ENCODE measurements at regions of chr2 and their contacts with region 1.

Region 1: DNA sequence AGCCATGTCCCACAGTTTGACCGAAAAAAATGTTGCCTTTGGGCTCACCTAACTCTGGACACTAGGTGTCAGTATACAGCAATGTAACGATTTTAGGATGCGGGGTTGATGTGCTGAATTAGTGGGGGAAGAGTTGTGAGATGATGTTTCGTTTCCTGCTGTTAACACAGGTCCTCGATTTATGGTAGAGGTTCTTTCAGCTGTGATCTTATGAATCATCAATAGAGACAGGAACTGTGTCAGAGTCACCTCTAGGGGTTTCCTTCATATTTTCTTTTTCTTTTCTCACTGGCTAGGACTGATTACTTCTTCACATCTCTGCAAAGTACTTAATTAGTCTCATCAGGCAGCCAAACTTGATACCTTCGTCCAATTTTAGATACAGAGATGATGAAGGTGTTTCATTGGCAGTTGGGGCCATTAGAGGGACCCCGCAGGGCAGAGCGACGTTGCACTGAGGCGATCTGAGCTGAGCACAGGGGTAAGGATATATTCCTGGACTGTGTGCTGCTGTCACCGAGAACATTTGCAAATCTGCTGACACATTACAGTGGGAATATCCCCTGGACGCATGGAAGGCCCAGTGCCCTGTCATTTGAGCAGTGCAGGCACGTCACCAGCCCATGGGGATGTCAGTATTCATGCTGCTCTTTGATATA is 10.2 kb upstream of the MMADHC start:
- DNase-seq: peak; percentile 54
- ATAC-seq: peak; percentile 92
- H3K4me3 ChIP-seq: 0 out of 4 replicates have a peak overlapping the region, but pooled peaks of 1 of the 2 experiments have one; percentile 3
- H3K27ac ChIP-seq: no peak overlapping the region
- H3K4me1 ChIP-seq: peaks cover 0 to 10% of the 10 kb centered on the region in 2 experiments; a peak in 2 of 4 replicates
- H3K27me3 ChIP-seq: no peaks in the 10 kb centered on the region
- CTCF ChIP-seq: peak; percentile 73 to 82 (median 76); a peak in 5 of 6 replicates
- POLR2A ChIP-seq: no peak
- RAD21 ChIP-seq: peak; percentile 92

Region 2: DNA sequence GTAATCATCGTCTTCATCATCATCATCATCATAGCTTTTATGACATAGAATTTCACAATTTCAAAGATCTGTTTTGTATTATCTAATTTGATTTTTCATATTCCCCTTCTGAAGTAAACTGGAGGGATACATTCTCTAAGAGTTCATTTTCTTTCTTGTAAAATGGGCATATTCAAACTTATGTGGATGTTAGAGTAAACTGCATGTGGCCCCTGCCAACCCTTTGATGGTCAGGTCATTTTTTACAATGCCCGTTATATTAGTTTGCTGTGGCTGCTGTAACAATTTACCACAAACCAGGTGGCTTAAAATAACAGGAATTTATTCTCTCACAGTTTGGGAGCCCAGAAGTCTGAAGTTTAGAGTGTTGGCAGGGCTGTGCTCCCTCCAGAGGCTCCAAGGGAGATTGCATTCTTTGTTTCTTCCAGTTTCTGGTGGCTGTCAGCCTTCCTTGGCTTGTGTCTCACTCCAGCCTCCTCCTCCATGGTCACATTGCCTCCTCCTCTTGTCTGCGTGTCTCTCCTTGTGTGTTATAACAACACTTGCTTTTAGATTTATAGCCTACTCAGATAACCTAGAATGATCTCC is 117.3 kb after region 1 on chr2:
- CTCF ChIA-PET with region 1: no interaction called
- POLR2A ChIA-PET with region 1: no interaction called
- RAD21 ChIA-PET with region 1: no interaction called
- intact Hi-C with region 1: loop called (anchors 1 kb)
- DNase-seq: peak; percentile 35
- ATAC-seq: peak; percentile 97
- H3K4me3 ChIP-seq: no peak overlapping the region
- H3K27ac ChIP-seq: no peak overlapping the region
- H3K4me1 ChIP-seq: no peaks in the 10 kb centered on the region
- H3K27me3 ChIP-seq: no peaks in the 10 kb centered on the region
- CTCF ChIP-seq: peak; percentile 36 to 75 (median 70); a peak in 5 of 6 replicates
- POLR2A ChIP-seq: no peak
- RAD21 ChIP-seq: peak; percentile 58

Region 3: DNA sequence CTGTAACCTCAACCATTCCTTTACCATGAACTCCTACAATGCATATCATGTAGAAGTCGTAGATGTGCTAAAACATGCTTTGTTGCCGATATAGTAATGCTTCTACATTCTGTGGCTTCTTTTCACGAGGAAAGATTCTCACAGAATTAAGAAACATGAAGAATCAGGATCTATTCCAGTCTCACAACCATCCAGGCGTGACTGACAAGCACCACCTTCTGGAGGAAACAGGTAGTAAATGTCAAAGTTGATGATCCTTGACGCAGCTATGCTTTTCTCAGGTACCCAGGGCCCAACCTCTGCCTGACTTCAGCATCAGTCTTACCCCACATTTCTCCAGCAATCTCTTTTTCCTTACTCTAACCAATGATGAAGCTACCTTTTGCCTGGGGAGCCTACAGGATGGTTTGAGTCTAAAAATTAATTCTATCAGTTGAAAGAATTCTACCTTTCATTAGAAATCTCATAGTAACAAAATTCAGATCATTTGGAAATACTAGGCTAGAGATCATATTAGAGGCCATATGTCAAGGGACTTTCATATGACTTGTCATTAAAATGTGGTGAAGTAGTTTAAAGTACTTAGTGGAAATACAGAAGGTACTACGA is 1013.0 kb after region 1 on chr2:
- CTCF ChIA-PET with region 1: interaction called, 3 read pairs
- POLR2A ChIA-PET with region 1: no interaction called
- RAD21 ChIA-PET with region 1: no interaction called
- intact Hi-C with region 1: loop called (anchors 1 kb)
- DNase-seq: peak; percentile 36
- ATAC-seq: peak; percentile 94
- H3K4me3 ChIP-seq: no peak overlapping the region
- H3K27ac ChIP-seq: no peak overlapping the region
- H3K4me1 ChIP-seq: no peaks in the 10 kb centered on the region
- H3K27me3 ChIP-seq: no peaks in the 10 kb centered on the region
- CTCF ChIP-seq: peak; percentile 54 to 75 (median 60); a peak in 5 of 6 replicates
- POLR2A ChIP-seq: no peak
- RAD21 ChIP-seq: peak; percentile 80

Region 4: DNA sequence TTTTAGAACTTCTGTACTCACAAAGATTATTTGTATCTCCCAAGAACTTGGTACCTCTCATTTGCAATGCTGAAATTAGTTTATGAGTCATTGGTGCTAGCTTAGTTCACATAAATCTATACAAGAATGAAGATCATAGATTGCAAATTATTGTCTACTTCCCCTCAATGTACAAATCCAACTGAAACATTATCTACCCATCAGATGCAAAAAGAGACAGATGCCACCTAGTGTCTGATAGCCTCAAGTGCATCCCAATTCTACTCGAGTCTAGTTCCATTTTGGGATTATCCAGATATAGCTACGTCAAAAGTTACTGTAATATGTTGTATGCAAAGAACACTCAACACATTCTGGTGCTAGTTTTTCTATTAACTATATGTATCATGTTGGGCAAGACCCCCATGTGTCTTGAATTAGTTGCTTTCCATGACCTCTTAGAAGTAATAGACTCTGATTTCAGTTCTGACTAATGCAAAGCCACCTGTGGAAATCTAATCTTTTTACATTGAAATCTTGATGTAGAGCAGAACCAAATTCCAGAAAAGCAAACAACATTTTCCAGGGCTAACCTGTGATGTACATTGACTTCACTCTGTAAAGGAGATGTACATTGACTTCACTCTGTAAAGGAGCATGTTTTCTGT is 1453.9 kb after region 1 on chr2:
- CTCF ChIA-PET with region 1: interaction called, 10 read pairs
- POLR2A ChIA-PET with region 1: no interaction called
- RAD21 ChIA-PET with region 1: no interaction called
- intact Hi-C with region 1: loop called (anchors 1 kb)
- DNase-seq: peak; percentile 41
- ATAC-seq: peak; percentile 84
- H3K4me3 ChIP-seq: no peak overlapping the region
- H3K27ac ChIP-seq: no peak overlapping the region
- H3K4me1 ChIP-seq: no peaks in the 10 kb centered on the region
- H3K27me3 ChIP-seq: no peaks in the 10 kb centered on the region
- CTCF ChIP-seq: peak; percentile 44 to 90 (median 81); a peak in 5 of 6 replicates
- POLR2A ChIP-seq: no peak
- RAD21 ChIP-seq: peak; percentile 71

Region 5: GRCh38 chr2:151238527-151239487 is 1641.0 kb after region 1 on chr2:
- CTCF ChIA-PET with region 1: interaction called, 13 read pairs
- POLR2A ChIA-PET with region 1: no interaction called
- RAD21 ChIA-PET with region 1: no interaction called
- intact Hi-C with region 1: loop called (anchors 1 kb)
- DNase-seq: peak; percentile 45
- ATAC-seq: peak; percentile 86
- H3K4me3 ChIP-seq: no peak overlapping the region
- H3K27ac ChIP-seq: no peak overlapping the region
- H3K4me1 ChIP-seq: no peaks in the 10 kb centered on the region; a peak in 1 of 4 replicates
- H3K27me3 ChIP-seq: no peaks in the 10 kb centered on the region
- CTCF ChIP-seq: peak; percentile 74 to 87 (median 75)
- POLR2A ChIP-seq: no peak
- RAD21 ChIP-seq: peak; percentile 90

Region 6: DNA sequence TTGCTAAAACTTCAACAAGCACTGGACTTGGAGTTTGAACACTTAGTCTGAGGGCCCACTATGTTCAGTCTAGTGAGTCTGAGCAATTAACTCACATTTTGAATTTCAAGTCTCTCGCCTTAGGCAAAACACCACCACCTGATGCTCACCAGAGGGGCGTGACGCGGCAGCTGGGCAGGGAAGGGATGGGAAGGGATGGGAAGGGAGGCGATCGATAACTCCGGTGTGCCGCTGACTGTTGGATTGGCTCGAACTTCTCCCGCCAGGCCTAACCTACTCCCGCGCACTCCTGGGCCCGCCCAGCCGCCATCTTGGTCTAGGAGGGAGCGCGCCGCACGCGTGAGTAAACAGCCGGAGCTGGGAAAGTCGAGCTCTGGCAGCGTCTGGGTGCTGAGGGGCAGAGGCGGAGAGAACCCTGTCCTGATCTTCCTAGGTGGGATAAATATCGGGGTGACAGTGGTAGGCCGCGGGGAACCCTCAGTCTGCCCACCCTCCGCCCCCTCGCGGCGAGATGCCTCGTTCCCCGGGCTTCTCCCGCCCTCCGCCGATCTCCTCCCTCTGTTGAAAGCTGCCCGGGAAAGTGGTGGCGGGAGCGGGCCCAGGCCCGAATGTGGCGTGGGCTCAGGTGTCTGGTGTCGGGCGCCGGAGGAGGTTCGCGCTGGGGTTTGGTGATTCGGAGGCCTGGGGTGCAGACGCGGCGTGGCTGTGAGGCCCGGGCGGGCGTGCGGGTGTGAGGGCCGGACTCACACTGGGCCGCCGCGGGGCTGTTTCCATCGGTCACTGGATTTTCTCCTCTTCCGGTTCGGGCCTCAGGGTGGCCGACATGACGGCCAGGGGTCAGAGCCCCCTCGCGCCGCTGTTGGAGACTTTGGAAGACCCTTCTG is 1812.0 kb after region 1 on chr2 and contains the start of gene RIF1:
- CTCF ChIA-PET with region 1: no interaction called
- POLR2A ChIA-PET with region 1: no interaction called
- RAD21 ChIA-PET with region 1: no interaction called
- intact Hi-C with region 1: loop called (anchors 10 kb)
- DNase-seq: peak; percentile 96
- ATAC-seq: peak; percentile 94
- H3K4me3 ChIP-seq: peak within 1 kb of the TSS; percentile 82 to 91
- H3K27ac ChIP-seq: peak within 1 kb of the TSS; percentile 82
- H3K4me1 ChIP-seq: peaks cover 0 to 14% of the 10 kb centered on the region in 2 experiments; a peak in 2 of 4 replicates
- H3K27me3 ChIP-seq: no peaks in the 10 kb centered on the region
- CTCF ChIP-seq: peak; percentile 3 to 55 (median 50); a peak in 3 of 6 replicates
- POLR2A ChIP-seq: peak; percentile 75
- RAD21 ChIP-seq: no peak
- total RNA-seq, gene RIF1: 48.0 TPM